ENCODE measurements at regions of chrX and their contacts with region 1.

Region 1: DNA sequence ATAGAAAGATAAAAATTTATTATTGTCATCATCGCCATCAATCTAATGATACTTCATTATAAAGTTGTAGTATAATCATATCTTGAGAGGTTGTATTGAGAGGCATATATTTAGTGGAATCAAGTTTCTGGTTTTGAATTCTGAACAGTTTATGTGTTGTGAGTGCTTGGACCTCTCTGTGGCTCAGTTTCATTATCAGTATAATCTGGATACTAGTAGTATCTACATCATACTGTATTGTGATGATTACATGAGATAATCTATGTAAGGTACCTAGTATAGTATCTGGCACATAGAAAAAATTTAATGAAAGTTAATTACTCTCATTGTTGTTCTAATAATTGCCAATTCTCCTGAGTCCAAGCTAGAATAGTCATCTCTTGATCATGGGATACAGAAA is 161.2 kb upstream of the UBQLN2 start:
- DNase-seq: no peak
- H3K4me3 ChIP-seq: no peak overlapping the region
- H3K4me3 Mint-ChIP-seq: peak overlapping the region in 2 of 8 donors; percentile 2 to 20
- H3K27ac ChIP-seq: no peak overlapping the region
- H3K27ac Mint-ChIP-seq: peak overlapping the region in 1 of 7 donors; percentile 22
- H3K4me1 ChIP-seq: peaks cover 41% of the 10 kb centered on the region
- H3K4me1 Mint-ChIP-seq: peaks cover 14 to 68% (median 35%) of the 10 kb centered on the region in 4 donors
- H3K27me3 ChIP-seq: no peaks in the 10 kb centered on the region
- H3K27me3 Mint-ChIP-seq: no peaks in the 10 kb centered on the region

Region 2: DNA sequence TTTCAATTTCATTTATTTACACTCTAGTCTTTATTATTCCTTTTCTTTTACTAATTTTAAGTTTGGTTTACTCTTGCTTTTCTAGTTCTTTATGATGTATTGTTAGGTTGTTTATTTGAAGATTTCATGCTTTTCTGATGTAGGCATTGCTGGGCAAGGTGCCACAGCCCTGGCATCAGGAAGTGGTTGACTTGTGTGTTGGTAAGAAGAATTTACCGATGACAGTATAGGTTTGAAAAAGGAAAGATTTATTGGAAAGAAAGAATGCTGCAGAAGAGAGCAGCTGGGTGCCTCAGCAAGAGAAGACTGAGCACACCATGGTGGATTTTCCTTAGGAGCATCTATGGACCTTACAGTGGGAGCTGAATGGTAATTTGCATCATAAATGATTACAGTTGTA is 16.9 kb before region 1 on chrX:
- CTCF ChIA-PET with region 1: no interaction called
- POLR2A ChIA-PET with region 1: no interaction called
- intact Hi-C with region 1: loop called (anchors 2 kb)
- DNase-seq: peak; percentile 24 to 46 (median 32)
- H3K4me3 ChIP-seq: peak overlapping the region in 1 of 2 donors; percentile 38
- H3K4me3 Mint-ChIP-seq: peak overlapping the region; percentile 84 to 95 (median 87)
- H3K27ac ChIP-seq: peak overlapping the region; percentile 38
- H3K27ac Mint-ChIP-seq: peak overlapping the region; percentile 9 to 83 (median 80)
- H3K4me1 ChIP-seq: peaks cover 36% of the 10 kb centered on the region
- H3K4me1 Mint-ChIP-seq: peaks cover 28 to 59% (median 46%) of the 10 kb centered on the region in 4 donors
- H3K27me3 ChIP-seq: no peaks in the 10 kb centered on the region
- H3K27me3 Mint-ChIP-seq: no peaks in the 10 kb centered on the region

Region 3: GRCh38 chrX:56468441-56468840 is 66.2 kb after region 1 on chrX:
- CTCF ChIA-PET with region 1: no interaction called
- POLR2A ChIA-PET with region 1: no interaction called
- intact Hi-C with region 1: no loop called
- DNase-seq: no peak
- H3K4me3 ChIP-seq: no peak overlapping the region
- H3K4me3 Mint-ChIP-seq: no peak overlapping the region
- H3K27ac ChIP-seq: no peak overlapping the region
- H3K27ac Mint-ChIP-seq: no peak overlapping the region
- H3K4me1 ChIP-seq: peaks cover 7% of the 10 kb centered on the region
- H3K4me1 Mint-ChIP-seq: peaks cover 5 to 20% (median 11%) of the 10 kb centered on the region in 4 donors
- H3K27me3 ChIP-seq: no peaks in the 10 kb centered on the region
- H3K27me3 Mint-ChIP-seq: no peaks in the 10 kb centered on the region